ENCODE measurements at regions of chr1 and their contacts with region 1.

Region 1: DNA sequence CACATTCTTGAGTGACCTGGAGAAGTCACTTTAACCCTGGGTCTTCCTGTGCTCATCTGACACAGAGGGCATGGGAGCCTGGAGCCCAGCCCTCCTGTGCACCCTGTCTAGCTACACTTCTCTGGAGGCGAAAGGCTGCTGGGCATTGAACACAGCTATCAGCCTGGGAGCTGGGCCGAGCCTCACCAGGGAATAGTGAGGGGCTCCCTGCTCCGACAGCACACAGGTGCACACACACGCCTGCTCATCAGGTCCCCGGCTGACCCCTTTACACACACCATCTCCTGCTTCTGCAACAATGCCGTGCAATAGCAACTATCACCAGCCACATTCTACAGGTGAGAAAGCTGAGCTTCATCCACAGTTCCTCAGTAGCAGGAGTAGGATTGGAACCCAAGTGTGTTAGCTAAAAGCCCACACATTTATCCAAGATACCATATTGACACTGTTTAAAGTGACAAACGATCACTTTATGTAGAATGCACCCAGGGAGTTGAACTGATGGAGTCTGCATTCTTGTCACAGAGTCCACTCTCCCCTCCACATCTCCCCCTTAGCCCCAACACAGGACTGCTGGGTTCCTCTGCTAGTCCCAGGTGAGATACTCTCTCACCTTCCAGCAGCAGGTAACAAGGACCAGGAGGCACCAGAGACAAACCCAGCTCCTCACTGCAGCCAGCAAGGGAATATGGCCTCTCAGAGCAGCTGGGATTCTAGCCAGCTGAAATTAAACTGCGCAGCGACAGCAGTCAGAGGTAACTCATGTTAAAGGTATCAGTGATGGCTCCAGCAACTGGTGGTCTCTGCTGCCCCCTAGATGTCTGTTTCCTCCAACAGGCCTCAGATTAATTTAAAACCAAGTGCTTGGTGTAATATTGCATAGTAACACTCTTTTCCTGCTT is 18.3 kb upstream of the CAPN8 start:
- DNase-seq: no peak
- ATAC-seq: peak; percentile 91
- H3K4me3 ChIP-seq: no peak overlapping the region
- H3K27ac ChIP-seq: no peak overlapping the region
- H3K4me1 ChIP-seq: peaks cover 0 to 4% of the 10 kb centered on the region in 2 experiments; a peak in 1 of 4 replicates
- H3K27me3 ChIP-seq: 0 out of 2 replicates have a peak, but pooled peaks cover 5% of the 10 kb centered on the region
- CTCF ChIP-seq: peak; percentile 71 to 86 (median 81); a peak in 5 of 6 replicates
- POLR2A ChIP-seq: no peak
- RAD21 ChIP-seq: peak; percentile 96

Region 2: DNA sequence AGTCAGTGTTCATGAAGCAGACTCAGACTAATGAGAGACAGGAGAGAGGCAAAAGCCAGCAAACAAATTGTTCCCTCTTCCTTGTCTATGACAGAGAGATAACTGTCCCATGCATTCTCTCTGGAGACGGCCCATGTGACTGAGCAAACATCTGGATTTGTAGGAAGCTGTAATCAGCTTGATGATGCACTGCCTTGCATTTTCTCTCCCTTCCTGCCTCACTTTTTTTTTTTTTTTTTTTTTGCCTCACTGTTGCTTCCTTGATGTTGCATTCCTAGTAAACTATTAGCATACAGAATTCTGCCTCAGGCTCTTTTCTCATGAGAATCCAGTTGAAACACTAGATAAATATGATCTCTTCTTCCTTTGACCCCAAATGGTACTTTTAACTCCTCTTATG is 1270.4 kb before region 1 on chr1:
- CTCF ChIA-PET with region 1: no interaction called
- POLR2A ChIA-PET with region 1: no interaction called
- RAD21 ChIA-PET with region 1: no interaction called
- intact Hi-C with region 1: no loop called
- DNase-seq: no peak
- ATAC-seq: no peak
- H3K4me3 ChIP-seq: no peak overlapping the region
- H3K27ac ChIP-seq: no peak overlapping the region
- H3K4me1 ChIP-seq: no peaks in the 10 kb centered on the region
- H3K27me3 ChIP-seq: peaks cover 3% of the 10 kb centered on the region; the same call in 1 of the 2 replicates
- CTCF ChIP-seq: no peak
- POLR2A ChIP-seq: no peak
- RAD21 ChIP-seq: no peak

Region 3: DNA sequence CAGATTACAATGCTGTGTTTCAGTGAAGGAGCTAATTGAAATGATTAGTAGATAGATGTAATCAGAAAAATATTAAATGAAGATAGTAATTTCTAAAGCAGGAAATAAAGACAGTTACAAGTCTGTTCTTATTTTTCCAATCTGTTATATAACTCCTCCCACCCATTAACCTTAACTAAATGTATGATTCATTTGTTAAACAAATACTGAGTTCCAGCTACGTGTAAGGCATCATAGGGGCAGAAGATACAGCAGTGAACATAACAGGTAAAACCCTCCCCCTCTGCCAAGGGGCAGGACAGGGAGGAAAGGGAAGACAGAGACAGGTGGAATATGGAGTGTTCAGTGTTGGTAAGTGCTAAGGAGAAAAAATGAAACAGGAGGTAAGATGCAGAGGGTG is 946.9 kb before region 1 on chr1 and contains the start of gene FAM177B:
- CTCF ChIA-PET with region 1: no interaction called
- POLR2A ChIA-PET with region 1: no interaction called
- RAD21 ChIA-PET with region 1: no interaction called
- intact Hi-C with region 1: loop called (anchors 2 kb)
- DNase-seq: no peak
- ATAC-seq: no peak
- H3K4me3 ChIP-seq: no peak within 1 kb of the TSS
- H3K27ac ChIP-seq: no peak within 1 kb of the TSS
- H3K4me1 ChIP-seq: no peaks in the 10 kb centered on the region
- H3K27me3 ChIP-seq: no peaks in the 10 kb centered on the region
- CTCF ChIP-seq: no peak
- POLR2A ChIP-seq: no peak
- RAD21 ChIP-seq: no peak
- total RNA-seq, gene FAM177B: not detected

Region 4: GRCh38 chr1:222792744-222793143 is 891.1 kb before region 1 on chr1:
- CTCF ChIA-PET with region 1: no interaction called
- POLR2A ChIA-PET with region 1: no interaction called
- RAD21 ChIA-PET with region 1: no interaction called
- intact Hi-C with region 1: loop called (anchors 2 kb)
- DNase-seq: no peak
- ATAC-seq: peak; percentile 70
- H3K4me3 ChIP-seq: no peak overlapping the region
- H3K27ac ChIP-seq: no peak overlapping the region
- H3K4me1 ChIP-seq: no peaks in the 10 kb centered on the region
- H3K27me3 ChIP-seq: no peaks in the 10 kb centered on the region
- CTCF ChIP-seq: peak; percentile 29 to 88 (median 76); a peak in 5 of 6 replicates
- POLR2A ChIP-seq: no peak
- RAD21 ChIP-seq: peak; percentile 90

Region 5: DNA sequence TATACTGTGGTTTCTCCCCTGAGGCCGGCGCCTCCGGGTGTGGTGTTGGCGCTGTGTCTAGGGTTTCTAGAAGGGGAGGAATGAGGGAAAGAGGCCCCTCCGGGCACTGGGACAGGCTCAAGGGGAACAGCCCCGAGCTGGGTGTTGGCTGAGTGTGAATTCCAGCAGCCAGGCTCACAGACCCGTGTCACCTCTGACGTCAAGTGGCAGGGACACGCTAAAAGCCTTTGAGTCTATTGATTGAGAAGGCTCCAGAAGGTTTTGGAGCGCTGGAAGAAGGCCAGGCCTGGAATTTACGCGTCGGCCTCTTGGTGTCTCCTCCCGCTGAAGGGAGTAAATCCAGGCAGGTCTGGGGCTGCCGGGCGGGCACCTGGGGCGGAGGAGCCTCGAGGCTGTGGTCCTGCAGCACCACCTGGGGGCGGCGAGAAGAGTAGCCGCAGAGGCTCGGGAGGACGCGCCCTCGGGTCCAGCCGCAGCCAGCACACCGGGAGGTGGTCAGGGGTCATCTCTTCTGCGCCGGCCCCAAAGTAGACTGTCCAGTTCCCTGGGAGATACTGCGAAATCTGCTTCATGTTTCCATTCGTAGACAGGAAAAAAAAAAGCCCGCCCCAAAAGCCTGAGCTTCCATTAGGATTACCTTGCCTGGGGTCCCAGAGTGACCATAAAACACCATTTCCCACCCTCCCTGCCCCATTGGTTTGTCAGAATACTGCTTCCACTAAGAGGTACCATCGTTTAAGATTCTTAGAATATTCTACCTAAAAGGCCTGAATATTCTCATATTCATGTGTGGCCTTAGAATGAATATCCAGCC is 602.4 kb before region 1 on chr1:
- CTCF ChIA-PET with region 1: no interaction called
- POLR2A ChIA-PET with region 1: no interaction called
- RAD21 ChIA-PET with region 1: no interaction called
- intact Hi-C with region 1: loop called (anchors 5 kb)
- DNase-seq: peak; percentile 97
- ATAC-seq: peak; percentile 99
- H3K4me3 ChIP-seq: peak overlapping the region in 1 of 2 experiments; percentile 21; a peak in 1 of 4 replicates
- H3K27ac ChIP-seq: peak overlapping the region; percentile 55
- H3K4me1 ChIP-seq: peaks cover 0 to 5% of the 10 kb centered on the region in 2 experiments; a peak in 2 of 4 replicates
- H3K27me3 ChIP-seq: no peaks in the 10 kb centered on the region
- CTCF ChIP-seq: peak; percentile 90 to 98 (median 91)
- POLR2A ChIP-seq: no peak
- RAD21 ChIP-seq: peak; percentile 100

Region 6: GRCh38 chr1:223133824-223134435 is 549.9 kb before region 1 on chr1:
- CTCF ChIA-PET with region 1: interaction called, 46 read pairs
- POLR2A ChIA-PET with region 1: interaction called, 4 read pairs
- RAD21 ChIA-PET with region 1: no interaction called
- intact Hi-C with region 1: loop called (anchors 1 kb)
- DNase-seq: peak; percentile 74
- ATAC-seq: peak; percentile 86
- H3K4me3 ChIP-seq: peak overlapping the region; percentile 31 to 50
- H3K27ac ChIP-seq: no peak overlapping the region
- H3K4me1 ChIP-seq: peaks cover 10 to 30% of the 10 kb centered on the region in 2 experiments
- H3K27me3 ChIP-seq: no peaks in the 10 kb centered on the region
- CTCF ChIP-seq: peak; percentile 82 to 93 (median 88)
- POLR2A ChIP-seq: no peak
- RAD21 ChIP-seq: peak; percentile 85

Region 7: GRCh38 chr1:223492044-223492443 is 191.8 kb before region 1 on chr1:
- CTCF ChIA-PET with region 1: no interaction called
- POLR2A ChIA-PET with region 1: no interaction called
- RAD21 ChIA-PET with region 1: no interaction called
- intact Hi-C with region 1: no loop called
- DNase-seq: no peak
- ATAC-seq: no peak
- H3K4me3 ChIP-seq: no peak overlapping the region
- H3K27ac ChIP-seq: no peak overlapping the region
- H3K4me1 ChIP-seq: no peaks in the 10 kb centered on the region
- H3K27me3 ChIP-seq: peaks cover 9% of the 10 kb centered on the region; the same call in 1 of the 2 replicates
- CTCF ChIP-seq: no peak
- POLR2A ChIP-seq: no peak
- RAD21 ChIP-seq: no peak

Region 8: DNA sequence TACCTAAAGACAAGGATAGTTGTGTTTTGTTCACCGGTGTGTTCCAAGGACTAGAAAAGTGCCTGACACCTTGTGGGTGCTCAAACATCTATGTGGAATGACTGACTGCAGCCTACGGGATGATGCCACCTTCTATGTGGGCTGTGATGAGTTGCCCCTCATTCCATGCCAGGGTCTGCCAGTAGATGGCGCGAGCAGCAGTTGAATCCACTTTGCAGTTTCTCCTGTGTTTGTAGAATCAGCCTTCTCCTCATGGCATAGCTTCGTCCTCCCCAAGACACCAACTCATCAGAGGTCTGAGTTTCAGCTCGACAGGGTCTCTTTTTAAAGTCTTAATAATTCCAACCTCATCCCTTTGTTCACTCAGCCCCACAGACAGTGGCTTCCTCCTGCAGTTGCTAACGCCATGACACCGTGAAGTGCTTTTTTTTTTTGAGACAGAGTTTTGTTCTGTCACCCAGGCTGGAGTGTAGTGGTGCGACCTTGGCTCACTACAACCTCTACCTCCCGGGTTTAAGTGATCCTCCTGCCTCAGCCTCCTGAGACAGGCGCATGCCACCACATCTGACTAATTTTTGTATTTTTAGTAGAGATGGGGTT is 152.0 kb before region 1 on chr1:
- CTCF ChIA-PET with region 1: interaction called, 4 read pairs
- POLR2A ChIA-PET with region 1: no interaction called
- RAD21 ChIA-PET with region 1: interaction called in 1 of 2 experiments, 4 read pairs
- intact Hi-C with region 1: loop called (anchors 1 kb)
- DNase-seq: peak; percentile 56
- ATAC-seq: peak; percentile 96
- H3K4me3 ChIP-seq: no peak overlapping the region
- H3K27ac ChIP-seq: no peak overlapping the region
- H3K4me1 ChIP-seq: no peaks in the 10 kb centered on the region
- H3K27me3 ChIP-seq: no peaks in the 10 kb centered on the region
- CTCF ChIP-seq: peak; percentile 60 to 97 (median 93)
- POLR2A ChIP-seq: no peak
- RAD21 ChIP-seq: peak; percentile 76

Region 9: GRCh38 chr1:223556414-223557129 is 127.3 kb before region 1 on chr1:
- CTCF ChIA-PET with region 1: interaction called, 50 read pairs
- POLR2A ChIA-PET with region 1: no interaction called
- RAD21 ChIA-PET with region 1: interaction called, 3 to 4 read pairs
- intact Hi-C with region 1: no loop called
- DNase-seq: peak; percentile 35
- ATAC-seq: peak; percentile 99
- H3K4me3 ChIP-seq: no peak overlapping the region
- H3K27ac ChIP-seq: no peak overlapping the region
- H3K4me1 ChIP-seq: no peaks in the 10 kb centered on the region
- H3K27me3 ChIP-seq: no peaks in the 10 kb centered on the region
- CTCF ChIP-seq: peak; percentile 91 to 93 (median 93)
- POLR2A ChIP-seq: no peak
- RAD21 ChIP-seq: peak; percentile 95

Region 10: DNA sequence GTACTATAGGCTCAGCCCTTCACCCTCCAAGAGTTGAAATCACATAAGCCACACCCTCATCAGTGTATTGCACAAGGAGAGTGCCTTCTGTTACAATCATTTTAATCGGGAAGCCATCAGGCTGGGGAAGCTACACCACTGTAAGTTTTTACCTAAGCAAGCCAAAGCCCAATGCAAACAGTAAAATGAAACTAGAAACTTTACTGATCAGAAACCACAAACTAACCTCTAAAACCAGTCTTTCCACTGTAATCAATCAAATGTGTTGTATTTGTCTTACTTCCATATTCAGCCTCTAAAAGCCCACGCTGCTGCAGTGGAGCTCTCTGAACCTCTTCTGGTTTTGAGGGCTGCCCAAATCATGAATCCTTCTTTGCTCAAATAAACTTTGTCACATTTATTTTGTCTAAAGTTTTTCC is 44.5 kb before region 1 on chr1:
- CTCF ChIA-PET with region 1: no interaction called
- POLR2A ChIA-PET with region 1: no interaction called
- RAD21 ChIA-PET with region 1: no interaction called
- intact Hi-C with region 1: no loop called
- DNase-seq: no peak
- ATAC-seq: no peak
- H3K4me3 ChIP-seq: no peak overlapping the region
- H3K27ac ChIP-seq: no peak overlapping the region
- H3K4me1 ChIP-seq: no peaks in the 10 kb centered on the region
- H3K27me3 ChIP-seq: peaks cover 5% of the 10 kb centered on the region; the same call in 1 of the 2 replicates
- CTCF ChIP-seq: no peak
- POLR2A ChIP-seq: no peak
- RAD21 ChIP-seq: no peak